T-cell (primary cell): ENCODE measurements at regions of chr7 and their contacts with region 1.

Region 1: DNA sequence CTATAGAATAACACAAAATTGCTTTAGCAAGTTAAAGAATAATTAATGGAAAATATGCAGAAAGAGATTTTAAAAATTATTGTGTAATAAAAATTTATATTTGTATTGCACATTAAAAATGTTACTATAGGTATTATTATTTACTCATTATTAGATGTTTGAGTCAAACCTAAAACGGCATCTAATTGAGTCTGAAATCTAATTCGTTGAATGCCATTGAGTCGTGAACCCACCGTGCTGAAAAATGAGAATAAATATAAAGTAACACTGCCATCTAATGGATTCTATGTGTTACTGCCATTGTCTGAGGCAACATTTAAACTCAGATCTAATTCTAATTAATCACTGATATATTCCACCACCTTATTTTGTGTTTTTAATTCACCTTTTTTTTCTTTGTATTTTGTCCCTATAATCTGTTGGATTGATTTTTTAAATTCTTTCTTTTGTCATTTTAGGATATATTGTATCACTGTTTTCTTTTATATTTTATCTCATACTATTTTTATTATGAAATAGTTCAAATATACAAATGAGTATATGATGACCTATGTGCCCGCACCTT is 62.2 kb downstream of the SAMD9 start:
- DNase-seq: peak in 1 of 35 experiments; percentile 62
- ATAC-seq: peak; percentile 49 to 70 (median 67)
- H3K4me3 ChIP-seq: no peak overlapping the region
- H3K4me3 Mint-ChIP-seq: no peak overlapping the region
- H3K27ac ChIP-seq: no peak overlapping the region
- H3K27ac Mint-ChIP-seq: no peak overlapping the region
- H3K4me1 ChIP-seq: peaks cover 0 to 3% of the 10 kb centered on the region in 2 experiments
- H3K4me1 Mint-ChIP-seq: peaks cover 0 to 8% (median 6%) of the 10 kb centered on the region in 3 donors
- H3K27me3 ChIP-seq: peaks cover 0 to 4% of the 10 kb centered on the region in 2 experiments
- H3K27me3 Mint-ChIP-seq: no peaks in the 10 kb centered on the region

Region 2: DNA sequence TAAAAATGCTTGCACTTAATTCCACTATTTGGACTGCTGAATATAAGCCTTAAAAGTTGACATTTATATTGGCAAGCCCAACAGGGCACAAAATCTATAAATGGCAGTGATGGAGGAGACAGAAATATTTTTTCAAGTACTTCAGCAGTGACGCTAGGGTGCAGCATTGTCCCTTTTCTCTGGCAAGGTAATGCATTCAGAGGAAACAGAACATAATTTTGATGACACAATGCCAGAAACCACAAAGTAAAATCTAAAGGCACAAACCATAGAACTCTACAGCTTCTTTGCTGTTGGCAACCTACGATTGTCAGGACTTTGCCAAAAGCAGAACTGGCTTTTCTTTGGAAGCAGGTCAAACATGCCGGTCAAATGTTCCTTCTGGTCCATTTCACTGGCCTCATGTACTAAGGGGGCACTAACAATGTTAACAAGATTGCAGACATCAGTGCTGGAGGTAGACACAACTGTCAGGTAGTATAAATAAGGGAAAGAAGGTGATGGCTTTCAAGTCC is 434.5 kb before region 1 on chr7:
- CTCF ChIA-PET with region 1: interaction called, 9 to 12 read pairs
- POLR2A ChIA-PET with region 1: no interaction called
- DNase-seq: peak; percentile 23 to 91 (median 74)
- ATAC-seq: peak; percentile 86 to 90 (median 88)
- H3K4me3 ChIP-seq: no peak overlapping the region
- H3K4me3 Mint-ChIP-seq: peak overlapping the region in 1 of 3 donors; percentile 15
- H3K27ac ChIP-seq: peak overlapping the region; percentile 5
- H3K27ac Mint-ChIP-seq: peak overlapping the region; percentile 82 to 85
- H3K4me1 ChIP-seq: peaks cover 4 to 21% of the 10 kb centered on the region in 2 experiments
- H3K4me1 Mint-ChIP-seq: peaks cover 29 to 38% (median 32%) of the 10 kb centered on the region in 3 donors
- H3K27me3 ChIP-seq: no peaks in the 10 kb centered on the region
- H3K27me3 Mint-ChIP-seq: no peaks in the 10 kb centered on the region